ENCODE measurements at regions of chr13 and their contacts with region 1.

Region 1: DNA sequence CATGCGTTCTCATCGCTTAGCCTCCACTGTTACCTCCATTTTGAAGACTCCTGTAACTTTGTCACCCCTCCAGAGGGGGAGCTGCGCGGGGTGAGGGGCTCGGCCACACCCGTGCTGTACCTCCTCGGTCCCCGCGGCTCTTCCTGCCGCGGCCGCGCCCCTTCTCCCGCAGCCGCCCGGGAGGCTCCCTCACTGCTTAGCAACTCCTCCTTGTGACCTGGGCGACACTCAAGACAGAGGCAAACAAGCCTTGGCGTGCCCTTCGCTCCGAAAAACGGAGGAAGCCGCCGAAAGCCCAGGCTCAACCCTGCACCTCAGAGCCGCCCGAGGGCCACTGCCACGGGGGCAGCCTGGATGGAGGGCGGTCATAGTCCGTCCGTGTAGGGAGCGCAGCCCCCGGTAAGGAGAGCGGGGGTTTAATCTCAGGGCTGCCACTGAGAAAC is 494.3 kb downstream of the FOXO1 start:
- DNase-seq: no peak
- ATAC-seq: peak; percentile 24
- H3K4me3 ChIP-seq: no peak overlapping the region
- H3K4me3 Mint-ChIP-seq: peak overlapping the region in 5 of 10 donors; percentile 18 to 57 (median 38)
- H3K27ac ChIP-seq: no peak overlapping the region
- H3K27ac Mint-ChIP-seq: peak overlapping the region in 1 of 9 donors; percentile 47
- H3K4me1 ChIP-seq: no peaks in the 10 kb centered on the region
- H3K4me1 Mint-ChIP-seq: peaks cover 13 to 62% (median 43%) of the 10 kb centered on the region in 7 donors
- H3K27me3 ChIP-seq: no peaks in the 10 kb centered on the region
- H3K27me3 Mint-ChIP-seq: peaks cover 0 to 4% (median 0%) of the 10 kb centered on the region in 5 donors

Region 2: GRCh38 chr13:38979891-38980749 is 1192.0 kb before region 1 on chr13:
- CTCF ChIA-PET with region 1: no interaction called
- POLR2A ChIA-PET with region 1: no interaction called
- intact Hi-C with region 1: no loop called
- DNase-seq: no peak
- ATAC-seq: no peak
- H3K4me3 ChIP-seq: no peak overlapping the region
- H3K4me3 Mint-ChIP-seq: no peak overlapping the region
- H3K27ac ChIP-seq: no peak overlapping the region
- H3K27ac Mint-ChIP-seq: no peak overlapping the region
- H3K4me1 ChIP-seq: no peaks in the 10 kb centered on the region
- H3K4me1 Mint-ChIP-seq: no peaks in the 10 kb centered on the region
- H3K27me3 ChIP-seq: no peaks in the 10 kb centered on the region
- H3K27me3 Mint-ChIP-seq: peaks cover 0 to 23% (median 15%) of the 10 kb centered on the region in 5 donors

Region 3: DNA sequence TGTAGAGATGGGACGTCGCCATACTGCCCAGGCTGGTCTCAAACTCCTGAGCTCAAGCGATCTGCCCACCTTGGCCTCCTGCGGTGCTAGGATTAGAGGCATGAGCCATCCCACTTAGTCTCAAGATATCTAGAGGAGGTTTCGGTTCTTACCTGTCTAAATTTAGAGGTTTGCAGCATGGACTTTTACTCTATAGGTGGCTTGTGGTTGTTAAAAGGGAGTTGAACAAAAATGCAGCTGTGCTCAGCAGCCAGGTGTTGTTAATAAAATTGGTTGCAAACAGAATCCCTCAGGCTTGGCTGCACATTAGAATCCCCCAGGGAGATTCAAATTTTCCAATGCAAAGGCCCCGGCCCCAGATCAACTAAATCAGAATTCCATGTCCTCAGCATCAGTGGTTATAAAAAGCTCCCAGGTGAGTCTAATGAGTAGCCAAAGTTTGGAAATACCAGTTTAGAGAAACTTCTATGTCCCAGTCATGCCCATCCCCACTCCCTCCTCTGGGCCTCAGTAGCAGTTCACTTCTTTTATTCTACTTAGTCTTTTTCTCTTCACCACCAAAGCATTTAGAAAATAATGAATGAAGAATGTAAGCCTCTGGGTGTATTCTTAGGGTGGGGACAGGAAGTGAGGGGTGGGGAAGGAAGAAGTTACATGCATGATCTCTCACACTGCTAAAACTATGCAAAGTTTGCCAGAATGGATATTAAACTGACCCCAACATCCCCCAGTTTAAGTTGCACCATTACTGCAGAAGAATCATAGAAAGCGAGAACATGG is 45.7 kb before region 1 on chr13:
- CTCF ChIA-PET with region 1: no interaction called
- POLR2A ChIA-PET with region 1: no interaction called
- intact Hi-C with region 1: loop called in 1 of 2 experiments (anchors 5 kb)
- DNase-seq: peak in 1 of 9 donors; percentile 16
- ATAC-seq: no peak
- H3K4me3 ChIP-seq: no peak overlapping the region
- H3K4me3 Mint-ChIP-seq: peak overlapping the region in 8 of 10 donors; percentile 5 to 78 (median 45)
- H3K27ac ChIP-seq: no peak overlapping the region
- H3K27ac Mint-ChIP-seq: peak overlapping the region in 4 of 9 donors; percentile 6 to 76 (median 30)
- H3K4me1 ChIP-seq: peaks cover 6 to 16% of the 10 kb centered on the region in 2 donors
- H3K4me1 Mint-ChIP-seq: peaks cover 24 to 60% (median 29%) of the 10 kb centered on the region in 7 donors
- H3K27me3 ChIP-seq: no peaks in the 10 kb centered on the region
- H3K27me3 Mint-ChIP-seq: no peaks in the 10 kb centered on the region

Region 4: GRCh38 chr13:40160618-40161350 is 11.4 kb before region 1 on chr13:
- CTCF ChIA-PET with region 1: no interaction called
- POLR2A ChIA-PET with region 1: no interaction called
- intact Hi-C with region 1: loop called in 1 of 2 experiments (anchors 2 kb)
- DNase-seq: no peak
- ATAC-seq: no peak
- H3K4me3 ChIP-seq: no peak overlapping the region
- H3K4me3 Mint-ChIP-seq: no peak overlapping the region
- H3K27ac ChIP-seq: no peak overlapping the region
- H3K27ac Mint-ChIP-seq: no peak overlapping the region
- H3K4me1 ChIP-seq: peaks cover 0 to 4% of the 10 kb centered on the region in 2 donors
- H3K4me1 Mint-ChIP-seq: peaks cover 9 to 21% (median 11%) of the 10 kb centered on the region in 7 donors
- H3K27me3 ChIP-seq: no peaks in the 10 kb centered on the region
- H3K27me3 Mint-ChIP-seq: no peaks in the 10 kb centered on the region